Activated CD4-positive, alpha-beta memory T cell treated with anti-CD3 and anti-CD28 coated beads, Interleukin-2, amount 10 ng/mL, durations not matched to agents 7 days and 5 days (primary cell): ENCODE measurements at regions of chr1 and their contacts with region 1.

Region 1: DNA sequence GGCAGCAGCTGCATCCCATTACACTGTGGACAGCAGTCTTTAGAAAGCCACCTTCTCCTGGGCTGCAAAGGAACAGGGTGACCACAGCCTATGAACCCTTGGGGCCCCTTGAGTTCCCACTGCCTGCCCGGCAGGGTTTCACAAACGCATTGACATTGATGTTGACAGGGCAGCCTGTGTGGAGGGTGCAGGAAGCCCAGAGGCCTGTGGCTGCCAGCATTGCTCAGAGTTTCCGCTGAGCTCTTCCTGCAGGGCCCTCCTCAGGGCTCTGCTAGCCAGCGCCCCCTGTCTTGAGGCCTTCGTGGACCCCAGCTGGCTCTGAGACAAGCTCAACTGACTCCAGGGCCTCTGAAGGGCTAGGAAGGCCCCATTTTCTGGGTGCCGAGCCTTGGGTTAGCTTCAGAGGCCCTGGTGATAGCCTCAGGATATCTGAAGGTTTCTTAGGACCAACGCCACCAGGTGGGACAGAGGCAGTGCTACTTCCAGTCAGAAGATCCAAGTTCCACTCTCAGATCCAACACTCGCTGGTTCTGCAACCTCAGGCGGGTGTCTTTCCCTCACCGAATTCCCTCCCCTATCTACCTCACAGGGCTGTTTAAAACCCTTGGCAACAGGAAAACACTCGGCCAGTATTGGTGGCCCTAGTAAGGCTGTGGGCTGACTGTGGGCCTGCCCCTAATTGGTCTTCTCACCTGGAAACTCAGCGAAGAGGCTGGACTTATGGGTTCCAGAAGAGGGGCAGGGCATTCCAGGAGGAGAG is 27.2 kb upstream of the EPS8L3 start:
- DNase-seq: peak; percentile 90
- H3K4me3 Mint-ChIP-seq: peak overlapping the region; percentile 21
- H3K27ac Mint-ChIP-seq: peak overlapping the region; percentile 95
- H3K4me1 Mint-ChIP-seq: peaks cover 92% of the 10 kb centered on the region
- H3K27me3 Mint-ChIP-seq: no peaks in the 10 kb centered on the region

Region 2: DNA sequence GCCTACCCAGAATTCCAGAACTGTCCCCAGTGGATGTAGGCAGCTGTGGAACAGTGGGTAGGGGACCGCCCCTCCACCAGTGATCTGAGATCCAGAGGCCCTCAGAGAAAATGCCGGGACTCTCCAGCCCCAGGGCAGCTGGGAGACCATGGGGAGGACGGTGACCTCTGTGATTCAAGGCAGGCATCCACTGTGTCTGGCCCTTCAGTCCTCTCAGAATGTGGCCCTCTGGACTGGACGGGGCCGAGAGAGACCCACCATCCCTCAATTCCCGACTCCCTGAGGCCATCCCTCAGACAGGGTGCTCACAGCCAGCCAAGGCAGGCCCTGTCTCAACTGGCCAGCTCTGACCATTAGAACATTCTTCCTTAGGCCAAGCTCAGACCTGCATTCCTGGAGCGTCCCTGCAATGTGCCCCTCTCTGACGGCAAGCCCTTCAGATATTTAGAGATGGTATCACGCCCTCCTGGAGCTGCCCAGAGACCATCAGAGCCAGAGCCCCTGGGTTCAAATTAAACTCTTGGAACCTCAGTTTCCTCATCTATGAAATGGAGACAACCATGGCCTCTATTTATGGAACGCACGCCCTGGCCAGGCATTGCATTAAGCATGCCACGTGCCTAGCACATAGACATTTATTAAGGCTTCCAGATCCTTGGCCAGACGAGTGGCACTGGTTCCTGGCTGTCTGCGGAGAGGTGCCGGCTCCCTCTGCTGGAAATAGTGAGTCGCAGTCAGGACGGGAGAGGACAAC is 17.6 kb before region 1 on chr1:
- CTCF ChIA-PET with region 1: interaction called, 113 read pairs
- POLR2A ChIA-PET with region 1: interaction called, 14 read pairs
- DNase-seq: peak; percentile 79
- H3K4me3 Mint-ChIP-seq: no peak overlapping the region
- H3K27ac Mint-ChIP-seq: no peak overlapping the region
- H3K4me1 Mint-ChIP-seq: peaks cover 17% of the 10 kb centered on the region
- H3K27me3 Mint-ChIP-seq: peaks cover 7% of the 10 kb centered on the region

Region 3: DNA sequence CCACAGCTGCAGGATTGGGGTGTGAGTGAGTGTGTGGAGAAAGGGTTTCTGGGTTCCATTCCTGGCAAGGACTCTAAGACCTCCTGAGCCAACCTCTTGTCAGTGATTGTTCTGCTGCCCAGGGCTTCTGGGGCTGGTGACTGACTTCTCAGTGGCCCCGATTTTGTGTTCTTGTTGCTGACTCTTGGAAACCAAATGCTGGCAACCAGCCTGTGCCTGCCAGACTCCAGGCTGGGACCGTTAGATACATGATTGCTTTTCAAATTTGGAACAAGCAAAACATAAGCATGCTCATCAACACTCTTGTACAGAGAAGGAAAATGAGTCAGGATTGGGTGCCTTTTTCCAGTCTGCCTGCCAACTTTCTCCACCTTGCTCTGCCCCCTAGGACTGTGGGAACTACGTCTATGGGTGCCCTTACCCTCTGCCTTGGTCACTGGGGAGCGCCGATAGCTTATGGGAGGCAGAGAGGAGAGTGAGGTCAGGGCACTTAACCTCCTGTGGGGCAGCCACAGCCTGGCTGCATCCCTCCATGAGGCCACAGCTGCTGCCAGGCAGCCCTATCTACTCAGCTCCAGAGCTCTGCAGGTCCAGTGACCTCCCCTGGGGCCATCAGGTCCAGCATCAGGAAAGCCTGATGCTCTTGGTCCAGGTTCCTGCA is 12.1 kb after region 1 on chr1:
- CTCF ChIA-PET with region 1: interaction called, 121 read pairs
- POLR2A ChIA-PET with region 1: interaction called, 137 read pairs
- DNase-seq: no peak
- H3K4me3 Mint-ChIP-seq: peak overlapping the region; percentile 66
- H3K27ac Mint-ChIP-seq: peak overlapping the region; percentile 100
- H3K4me1 Mint-ChIP-seq: peaks cover 89% of the 10 kb centered on the region
- H3K27me3 Mint-ChIP-seq: no peaks in the 10 kb centered on the region

Region 4: DNA sequence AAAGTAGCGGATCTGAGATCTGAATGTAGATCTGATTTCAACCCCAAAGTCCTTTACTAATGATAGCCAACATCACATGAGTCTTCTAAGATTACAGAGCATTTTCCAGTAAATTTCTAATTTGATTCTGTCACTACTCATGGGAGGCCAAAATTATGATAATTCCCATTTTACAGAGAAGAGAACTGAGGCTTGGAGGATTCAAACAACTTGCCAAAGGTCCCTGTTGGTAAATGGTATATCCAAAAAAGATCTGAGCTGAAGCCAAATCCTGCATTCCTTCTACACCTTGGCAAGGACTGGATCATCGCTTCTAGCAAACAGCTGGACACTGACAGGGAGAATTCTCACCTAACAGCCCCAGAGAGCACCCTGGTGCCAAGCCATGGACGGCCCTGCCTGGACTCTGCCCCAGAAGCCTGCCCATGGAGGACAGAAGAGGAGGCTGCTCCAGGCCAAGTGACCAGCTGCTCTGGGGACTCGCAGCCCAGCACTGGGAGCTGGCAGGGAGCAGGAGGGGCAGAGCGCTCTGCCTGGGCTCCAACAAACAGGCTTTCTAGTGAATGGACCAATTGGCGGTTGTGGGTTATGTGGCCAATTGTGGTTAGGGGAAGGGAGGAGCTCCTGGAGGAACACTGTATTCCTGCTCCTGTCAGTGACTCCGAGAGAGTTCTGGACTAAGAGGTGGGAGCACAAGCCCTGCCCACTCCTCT is 113.3 kb after region 1 on chr1:
- CTCF ChIA-PET with region 1: interaction called, 13 read pairs
- POLR2A ChIA-PET with region 1: interaction called, 18 read pairs
- DNase-seq: no peak
- H3K4me3 Mint-ChIP-seq: no peak overlapping the region
- H3K27ac Mint-ChIP-seq: peak overlapping the region; percentile 5
- H3K4me1 Mint-ChIP-seq: peaks cover 56% of the 10 kb centered on the region
- H3K27me3 Mint-ChIP-seq: no peaks in the 10 kb centered on the region

Region 5: DNA sequence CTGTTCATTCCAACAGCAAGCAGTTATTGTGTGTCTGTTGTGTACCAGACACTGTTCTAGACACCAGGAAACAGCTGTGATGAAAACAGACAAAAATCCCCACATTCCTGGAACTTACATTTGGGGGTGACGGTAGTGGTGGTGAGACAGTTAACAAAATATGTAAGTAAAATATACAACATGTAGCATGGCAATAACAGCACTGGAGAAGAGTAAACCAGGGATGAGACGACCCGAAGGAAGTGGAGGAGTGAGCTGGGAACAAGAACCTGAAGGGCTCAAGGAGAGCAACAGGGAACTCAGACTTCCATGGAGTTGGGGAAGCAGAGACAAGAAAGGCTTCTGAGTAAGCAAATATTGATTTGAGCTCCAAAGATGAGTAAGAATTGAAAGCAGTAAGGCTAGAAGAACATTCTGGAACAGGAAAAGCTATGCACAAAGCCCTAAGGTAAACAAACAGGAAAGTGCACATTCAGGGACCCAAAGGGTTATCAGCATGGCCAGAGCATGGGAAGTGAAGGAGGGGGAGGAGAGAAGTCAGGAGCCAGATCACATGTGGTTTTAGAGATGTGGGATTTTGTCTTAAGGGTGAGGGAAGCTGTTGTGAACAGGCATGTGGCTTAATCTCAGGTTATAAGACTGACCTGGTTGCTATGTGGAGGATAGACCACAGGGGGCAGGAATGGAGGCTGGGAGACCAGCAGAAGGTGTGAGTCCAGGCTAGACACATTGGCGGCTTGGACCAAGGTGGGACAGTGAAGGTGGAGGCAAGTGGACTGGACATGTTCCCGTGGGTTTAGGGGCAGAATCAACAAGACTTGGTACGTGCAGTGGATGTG is 127.1 kb after region 1 on chr1:
- CTCF ChIA-PET with region 1: interaction called, 23 read pairs
- POLR2A ChIA-PET with region 1: interaction called, 52 read pairs
- DNase-seq: no peak
- H3K4me3 Mint-ChIP-seq: no peak overlapping the region
- H3K27ac Mint-ChIP-seq: peak overlapping the region; percentile 44
- H3K4me1 Mint-ChIP-seq: peaks cover 50% of the 10 kb centered on the region
- H3K27me3 Mint-ChIP-seq: no peaks in the 10 kb centered on the region